ENCODE measurements at regions of chr4 and their contacts with region 1.

Region 1: DNA sequence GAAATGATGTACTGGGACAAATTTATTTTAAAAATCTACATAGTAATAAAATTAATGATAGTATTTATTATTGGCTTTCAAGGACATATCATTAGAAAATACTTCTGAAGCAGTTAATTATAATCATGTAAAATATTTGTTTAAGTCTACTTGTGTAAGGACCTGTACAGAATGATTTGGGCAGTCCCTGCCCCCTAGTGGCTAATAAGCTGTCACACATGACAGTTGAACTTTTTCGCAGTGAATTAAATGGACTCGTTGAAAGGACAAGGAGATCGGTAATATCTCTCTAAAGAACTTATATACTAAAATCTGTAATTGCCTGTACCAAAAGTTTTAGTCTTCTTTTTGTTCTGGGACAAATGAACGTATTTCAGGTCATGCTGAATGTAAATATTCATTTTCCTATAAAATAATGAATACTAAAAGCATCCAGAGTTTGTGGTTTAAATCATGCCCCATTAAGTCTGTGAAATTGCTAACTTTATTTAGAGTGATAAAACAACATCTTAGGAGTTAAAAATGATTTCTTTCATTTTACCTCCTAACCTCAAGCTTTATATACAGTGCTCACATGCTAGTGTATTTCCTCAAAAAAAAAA is 13.6 kb downstream of the EXOC1 start:
- DNase-seq: peak in 7 of 9 donors; percentile 21 to 56 (median 50)
- ATAC-seq: peak; percentile 88
- H3K4me3 ChIP-seq: no peak overlapping the region
- H3K4me3 Mint-ChIP-seq: no peak overlapping the region
- H3K27ac ChIP-seq: no peak overlapping the region
- H3K27ac Mint-ChIP-seq: no peak overlapping the region
- H3K4me1 ChIP-seq: no peaks in the 10 kb centered on the region
- H3K4me1 Mint-ChIP-seq: peaks cover 6 to 20% (median 15%) of the 10 kb centered on the region in 7 donors
- H3K27me3 ChIP-seq: no peaks in the 10 kb centered on the region
- H3K27me3 Mint-ChIP-seq: no peaks in the 10 kb centered on the region

Region 2: DNA sequence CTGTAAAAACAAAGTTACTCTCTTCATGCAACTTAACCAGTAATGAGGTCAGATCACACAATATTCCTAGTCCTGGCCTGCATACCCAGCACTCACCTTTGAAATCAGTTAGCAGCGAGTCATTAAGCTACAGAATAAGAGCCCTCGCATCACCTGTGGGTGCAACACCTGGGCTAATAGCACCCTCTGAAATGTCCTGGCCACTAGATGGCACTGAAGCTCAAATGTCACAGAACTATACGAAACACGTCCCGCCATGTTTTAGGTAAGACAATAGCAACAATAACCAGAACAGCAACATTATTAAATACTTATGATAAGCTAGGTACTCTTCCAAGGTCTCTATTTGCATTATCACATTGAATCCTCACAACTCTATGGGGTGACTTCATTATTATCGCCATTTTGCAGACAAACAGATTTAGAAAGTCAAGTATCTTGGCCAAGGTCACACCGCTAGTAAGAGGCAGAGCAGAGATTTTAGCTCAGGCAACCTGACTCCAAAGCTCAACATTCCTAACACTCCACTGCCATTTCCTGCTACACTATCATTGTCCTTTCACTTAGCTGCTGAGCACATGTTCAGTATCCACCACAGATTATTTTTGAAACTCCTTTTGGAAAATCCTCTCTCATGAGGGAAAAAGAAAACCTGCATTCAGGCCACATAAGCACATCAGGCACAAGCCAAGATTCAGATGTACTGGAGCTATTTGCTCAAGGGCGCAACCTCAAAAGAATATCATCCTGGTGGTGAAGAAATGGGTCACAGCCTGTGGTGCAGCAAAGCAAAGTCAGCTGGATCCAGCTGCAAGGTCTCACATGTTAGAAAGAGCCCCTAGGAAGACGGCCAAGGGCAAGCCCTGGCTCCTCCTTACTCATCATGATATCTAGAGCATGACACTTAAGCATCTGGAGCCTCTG is 682.2 kb before region 1 on chr4:
- CTCF ChIA-PET with region 1: interaction called, 4 read pairs
- POLR2A ChIA-PET with region 1: no interaction called
- intact Hi-C with region 1: loop called in 1 of 2 experiments (anchors 1 kb)
- DNase-seq: peak in 6 of 9 donors; percentile 4 to 22 (median 15)
- ATAC-seq: no peak
- H3K4me3 ChIP-seq: no peak overlapping the region
- H3K4me3 Mint-ChIP-seq: no peak overlapping the region
- H3K27ac ChIP-seq: no peak overlapping the region
- H3K27ac Mint-ChIP-seq: no peak overlapping the region
- H3K4me1 ChIP-seq: no peaks in the 10 kb centered on the region
- H3K4me1 Mint-ChIP-seq: no peaks in the 10 kb centered on the region
- H3K27me3 ChIP-seq: no peaks in the 10 kb centered on the region
- H3K27me3 Mint-ChIP-seq: peaks cover 0 to 23% (median 17%) of the 10 kb centered on the region in 5 donors

Region 3: DNA sequence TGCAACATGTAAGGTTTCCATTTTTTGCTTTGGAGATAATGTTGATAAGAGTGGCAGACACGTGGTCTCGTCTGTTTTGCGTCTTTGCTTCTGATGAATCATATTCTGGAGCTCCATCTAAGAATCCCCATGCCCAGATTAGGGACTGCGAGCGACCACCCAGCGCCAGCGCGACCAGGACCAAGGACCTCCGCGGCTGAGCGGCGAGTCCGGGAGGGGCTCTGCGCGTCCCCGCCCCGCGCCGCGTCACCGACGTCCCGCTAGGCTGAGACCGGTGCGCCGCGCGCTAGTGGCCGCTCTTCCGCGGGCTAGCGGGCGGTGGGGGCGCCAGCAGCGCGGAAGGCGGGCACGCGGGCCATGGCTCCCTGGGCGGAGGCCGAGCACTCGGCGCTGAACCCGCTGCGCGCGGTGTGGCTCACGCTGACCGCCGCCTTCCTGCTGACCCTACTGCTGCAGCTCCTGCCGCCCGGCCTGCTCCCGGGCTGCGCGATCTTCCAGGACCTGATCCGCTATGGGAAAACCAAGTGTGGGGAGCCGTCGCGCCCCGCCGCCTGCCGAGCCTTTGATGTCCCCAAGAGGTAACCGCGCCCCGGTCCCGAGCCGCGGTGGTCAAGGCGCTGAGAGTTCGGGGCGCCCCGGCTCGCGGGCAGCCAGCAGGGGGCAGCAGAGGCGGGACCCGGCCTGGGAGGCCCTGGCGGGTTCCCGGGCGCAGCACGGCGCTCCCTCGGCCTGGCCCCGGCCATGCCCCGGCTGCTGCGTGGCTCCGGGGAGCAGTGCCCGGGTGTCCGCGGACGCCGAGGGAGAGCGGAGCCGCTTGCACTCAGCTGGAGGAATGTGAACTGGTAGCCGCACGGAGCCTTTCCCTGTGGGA is 520.9 kb before region 1 on chr4 and contains the start of gene SRD5A3:
- CTCF ChIA-PET with region 1: no interaction called
- POLR2A ChIA-PET with region 1: no interaction called
- intact Hi-C with region 1: loop called (anchors 1 kb)
- DNase-seq: peak; percentile 53 to 92 (median 72)
- ATAC-seq: peak; percentile 97
- H3K4me3 ChIP-seq: peak within 1 kb of the TSS; percentile 79
- H3K4me3 Mint-ChIP-seq: peak within 1 kb of the TSS; percentile 83 to 94 (median 90)
- H3K27ac ChIP-seq: peak within 1 kb of the TSS; percentile 69
- H3K27ac Mint-ChIP-seq: peak within 1 kb of the TSS; percentile 70 to 91 (median 87)
- H3K4me1 ChIP-seq: peaks cover 6 to 8% of the 10 kb centered on the region in 2 donors
- H3K4me1 Mint-ChIP-seq: peaks cover 8 to 23% (median 19%) of the 10 kb centered on the region in 7 donors
- H3K27me3 ChIP-seq: no peaks in the 10 kb centered on the region
- H3K27me3 Mint-ChIP-seq: no peaks in the 10 kb centered on the region
- total RNA-seq, gene SRD5A3: 1.9 to 8.5 (median 4.5) TPM

Region 4: GRCh38 chr4:55635741-55636655 is 231.1 kb before region 1 on chr4 and contains the start of gene NMU:
- CTCF ChIA-PET with region 1: no interaction called
- POLR2A ChIA-PET with region 1: no interaction called
- intact Hi-C with region 1: loop called in 1 of 2 experiments (anchors 10 kb)
- DNase-seq: peak in 2 of 9 donors; percentile 3 to 28
- ATAC-seq: peak; percentile 29
- H3K4me3 ChIP-seq: no peak within 1 kb of the TSS
- H3K4me3 Mint-ChIP-seq: peak within 1 kb of the TSS; percentile 37 to 86 (median 72)
- H3K27ac ChIP-seq: no peak within 1 kb of the TSS
- H3K27ac Mint-ChIP-seq: peak within 1 kb of the TSS in 1 of 9 donors; percentile 43
- H3K4me1 ChIP-seq: no peaks in the 10 kb centered on the region
- H3K4me1 Mint-ChIP-seq: peaks cover 12 to 22% (median 19%) of the 10 kb centered on the region in 7 donors
- H3K27me3 ChIP-seq: peaks cover 0 to 5% of the 10 kb centered on the region in 2 donors
- H3K27me3 Mint-ChIP-seq: peaks cover 68 to 77% (median 75%) of the 10 kb centered on the region in 5 donors
- total RNA-seq, gene NMU: not detected

Region 5: GRCh38 chr4:55754754-55755350 is 112.2 kb before region 1 on chr4:
- CTCF ChIA-PET with region 1: no interaction called
- POLR2A ChIA-PET with region 1: no interaction called
- intact Hi-C with region 1: loop called in 1 of 2 experiments (anchors 10 kb)
- DNase-seq: no peak
- ATAC-seq: no peak
- H3K4me3 ChIP-seq: no peak overlapping the region
- H3K4me3 Mint-ChIP-seq: no peak overlapping the region
- H3K27ac ChIP-seq: no peak overlapping the region
- H3K27ac Mint-ChIP-seq: no peak overlapping the region
- H3K4me1 ChIP-seq: no peaks in the 10 kb centered on the region
- H3K4me1 Mint-ChIP-seq: peaks cover 0 to 4% (median 0%) of the 10 kb centered on the region in 7 donors
- H3K27me3 ChIP-seq: no peaks in the 10 kb centered on the region
- H3K27me3 Mint-ChIP-seq: peaks cover 0 to 5% (median 0%) of the 10 kb centered on the region in 5 donors